ENCODE measurements at regions of chr5 and their contacts with region 1.

Region 1: DNA sequence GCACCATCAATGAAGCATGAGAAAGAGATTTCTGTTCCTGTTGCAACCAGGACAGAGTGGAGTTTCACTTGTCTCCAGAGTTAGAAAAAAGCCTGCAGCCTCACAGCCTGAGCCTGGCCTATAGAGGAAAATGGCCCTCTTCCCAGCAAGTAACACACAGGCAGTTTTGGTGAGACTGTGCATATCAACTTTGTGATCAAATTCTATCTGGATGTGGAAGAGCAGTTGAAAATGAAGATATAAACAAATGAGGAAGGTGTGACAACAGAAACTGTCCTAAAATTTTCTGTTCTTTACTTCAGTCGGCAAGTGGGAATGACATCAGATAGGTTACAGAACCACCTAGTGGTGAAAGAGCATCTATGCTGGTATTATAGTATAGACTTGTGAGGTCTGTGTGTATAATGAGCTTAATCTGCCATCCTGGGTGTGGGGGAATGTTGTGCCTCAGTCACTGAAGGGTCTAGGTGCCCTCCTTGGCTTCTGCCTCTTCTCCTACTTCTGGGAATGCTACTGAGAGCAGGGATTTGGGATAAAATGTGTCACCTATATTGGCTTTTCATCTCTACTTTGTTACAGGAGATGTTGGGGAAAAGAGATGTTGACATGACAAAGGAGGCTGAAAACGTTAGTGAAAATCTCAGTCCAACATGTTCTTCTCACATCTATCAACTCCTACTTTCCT is 28.2 kb downstream of the YIPF5 start:
- DNase-seq: peak; percentile 25
- ATAC-seq: peak; percentile 99
- H3K4me3 ChIP-seq: no peak overlapping the region
- H3K27ac ChIP-seq: no peak overlapping the region
- H3K4me1 ChIP-seq: peaks cover 11% of the 10 kb centered on the region
- H3K27me3 ChIP-seq: no peaks in the 10 kb centered on the region; a peak in 1 of 4 replicates
- CTCF ChIP-seq: peak; percentile 64 to 71 (median 69)
- EP300 ChIP-seq: no peak
- POLR2A ChIP-seq: no peak
- RAD21 ChIP-seq: peak; percentile 83

Region 2: GRCh38 chr5:142946547-142947426 is 1195.5 kb before region 1 on chr5:
- CTCF ChIA-PET with region 1: no interaction called
- POLR2A ChIA-PET with region 1: interaction called, 10 read pairs
- RAD21 ChIA-PET with region 1: no interaction called
- SMC1A ChIA-PET with region 1: no interaction called
- in situ Hi-C with region 1: no loop called
- intact Hi-C with region 1: no loop called
- DNase-seq: no peak
- ATAC-seq: no peak
- H3K4me3 ChIP-seq: no peak overlapping the region
- H3K27ac ChIP-seq: no peak overlapping the region
- H3K4me1 ChIP-seq: no peaks in the 10 kb centered on the region
- H3K27me3 ChIP-seq: no peaks in the 10 kb centered on the region
- CTCF ChIP-seq: no peak
- EP300 ChIP-seq: no peak
- POLR2A ChIP-seq: no peak
- RAD21 ChIP-seq: no peak

Region 3: GRCh38 chr5:143979044-143979690 is 163.1 kb before region 1 on chr5:
- CTCF ChIA-PET with region 1: interaction called, 4 read pairs
- POLR2A ChIA-PET with region 1: no interaction called
- RAD21 ChIA-PET with region 1: no interaction called
- SMC1A ChIA-PET with region 1: interaction called, 12 read pairs
- in situ Hi-C with region 1: no loop called
- intact Hi-C with region 1: no loop called
- DNase-seq: no peak
- ATAC-seq: peak; percentile 92
- H3K4me3 ChIP-seq: no peak overlapping the region
- H3K27ac ChIP-seq: peak overlapping the region; percentile 6; the same call in 1 of the 2 replicates
- H3K4me1 ChIP-seq: no peaks in the 10 kb centered on the region
- H3K27me3 ChIP-seq: no peaks in the 10 kb centered on the region
- CTCF ChIP-seq: no peak
- EP300 ChIP-seq: 0 out of 4 replicates have a peak, but pooled peaks of 1 of the 2 experiments have one; percentile 11
- POLR2A ChIP-seq: no peak
- RAD21 ChIP-seq: no peak

Region 4: DNA sequence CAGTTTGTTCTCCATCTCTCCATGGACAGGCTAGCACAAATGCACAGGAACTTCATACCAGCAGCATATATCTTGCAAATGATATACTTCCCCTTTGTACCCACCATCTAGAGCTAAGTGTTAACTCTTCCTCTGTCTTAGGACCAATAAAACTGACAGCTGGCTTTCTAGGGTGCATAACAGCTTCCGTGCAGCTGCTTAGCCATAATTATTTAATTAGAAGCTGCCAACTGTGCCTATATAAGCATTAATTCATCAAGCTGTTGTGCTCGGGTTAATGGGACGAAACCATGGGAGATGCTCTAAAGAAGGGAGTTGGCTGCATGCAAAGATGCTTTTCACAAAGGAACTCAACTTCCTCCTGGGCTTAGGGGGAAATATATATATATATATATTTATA is 67.1 kb after region 1 on chr5:
- CTCF ChIA-PET with region 1: no interaction called
- POLR2A ChIA-PET with region 1: no interaction called
- RAD21 ChIA-PET with region 1: no interaction called
- SMC1A ChIA-PET with region 1: no interaction called
- in situ Hi-C with region 1: no loop called
- intact Hi-C with region 1: no loop called
- DNase-seq: no peak
- ATAC-seq: no peak
- H3K4me3 ChIP-seq: no peak overlapping the region
- H3K27ac ChIP-seq: no peak overlapping the region
- H3K4me1 ChIP-seq: no peaks in the 10 kb centered on the region
- H3K27me3 ChIP-seq: peaks cover 3 to 11% of the 10 kb centered on the region in 2 experiments
- CTCF ChIP-seq: no peak
- EP300 ChIP-seq: no peak
- POLR2A ChIP-seq: no peak
- RAD21 ChIP-seq: no peak

Region 5: GRCh38 chr5:144247131-144247530 is 104.8 kb after region 1 on chr5:
- CTCF ChIA-PET with region 1: no interaction called
- POLR2A ChIA-PET with region 1: no interaction called
- RAD21 ChIA-PET with region 1: no interaction called
- SMC1A ChIA-PET with region 1: no interaction called
- in situ Hi-C with region 1: no loop called
- intact Hi-C with region 1: no loop called
- DNase-seq: no peak
- ATAC-seq: no peak
- H3K4me3 ChIP-seq: no peak overlapping the region
- H3K27ac ChIP-seq: no peak overlapping the region
- H3K4me1 ChIP-seq: no peaks in the 10 kb centered on the region
- H3K27me3 ChIP-seq: no peaks in the 10 kb centered on the region; a peak in 1 of 4 replicates
- CTCF ChIP-seq: no peak
- EP300 ChIP-seq: no peak
- POLR2A ChIP-seq: no peak
- RAD21 ChIP-seq: no peak

Measured in GM12878 (cell line).